Breast epithelium (tissue), 4 donors: ENCODE measurements at regions of chr17 and their contacts with region 1.

Region 1: GRCh38 chr17:28951991-28952975 is 965 bp upstream of the PHF12 start:
- DNase-seq: peak; percentile 95 to 99
- H3K4me3 ChIP-seq: peak overlapping the region; percentile 56 to 97 (median 96)
- H3K27ac ChIP-seq: peak overlapping the region; percentile 98
- H3K4me1 ChIP-seq: no peaks in the 10 kb centered on the region
- H3K27me3 ChIP-seq: no peaks in the 10 kb centered on the region
- CTCF ChIP-seq: no peak
- POLR2A ChIP-seq: peak; percentile 4

Region 2: DNA sequence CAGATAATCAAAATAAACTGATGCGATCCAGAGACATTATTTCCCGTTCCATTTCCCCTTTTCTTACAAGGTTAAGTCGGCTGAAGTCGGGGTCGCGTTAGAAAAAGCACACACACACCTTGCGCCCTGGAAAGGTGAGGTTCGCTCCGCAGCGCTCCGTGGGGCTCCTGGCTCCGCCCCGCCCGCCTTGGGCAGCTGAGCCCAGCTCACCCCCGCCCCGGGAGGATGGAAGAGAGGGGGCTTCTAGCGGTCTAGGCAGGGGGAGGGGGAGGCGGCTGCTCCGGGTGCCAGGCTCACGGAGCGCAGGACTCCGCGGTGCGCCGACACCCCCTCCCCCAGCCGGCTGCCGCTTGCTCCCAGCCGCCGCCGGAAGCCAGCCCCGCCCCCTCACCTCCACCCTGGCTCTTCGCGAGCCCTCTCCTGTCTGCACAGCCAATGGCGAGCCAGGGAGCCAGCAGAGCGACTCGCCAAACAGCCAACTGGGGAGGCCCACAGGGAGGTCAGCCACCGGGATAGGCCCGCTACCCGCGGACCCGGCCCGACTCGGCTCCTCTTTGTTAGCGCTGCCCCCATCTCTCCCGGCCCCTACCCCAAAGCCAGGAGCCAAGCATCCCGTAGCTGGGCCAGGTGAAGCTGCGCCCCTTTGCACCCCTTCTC is 140.1 kb before region 1 on chr17:
- intact Hi-C with region 1: loop called (anchors 10 kb)
- DNase-seq: peak; percentile 96 to 97
- H3K4me3 ChIP-seq: peak overlapping the region; percentile 86 to 90 (median 89)
- H3K27ac ChIP-seq: peak overlapping the region; percentile 88 to 92
- H3K4me1 ChIP-seq: peaks cover 7 to 19% of the 10 kb centered on the region in 2 donors
- H3K27me3 ChIP-seq: no peaks in the 10 kb centered on the region
- CTCF ChIP-seq: no peak
- POLR2A ChIP-seq: no peak

Region 3: GRCh38 chr17:28940675-28941074 is 11.6 kb before region 1 on chr17:
- intact Hi-C with region 1: loop called (anchors 1 kb)
- DNase-seq: no peak
- H3K4me3 ChIP-seq: no peak overlapping the region
- H3K27ac ChIP-seq: no peak overlapping the region
- H3K4me1 ChIP-seq: peaks cover 0 to 37% of the 10 kb centered on the region in 2 donors
- H3K27me3 ChIP-seq: no peaks in the 10 kb centered on the region
- CTCF ChIP-seq: no peak
- POLR2A ChIP-seq: no peak

Region 4: GRCh38 chr17:28982131-28982951 is 30.1 kb after region 1 on chr17:
- intact Hi-C with region 1: no loop called
- DNase-seq: peak in 1 of 2 donors; percentile 28
- H3K4me3 ChIP-seq: no peak overlapping the region
- H3K27ac ChIP-seq: peak overlapping the region in 1 of 2 donors; percentile 61
- H3K4me1 ChIP-seq: no peaks in the 10 kb centered on the region
- H3K27me3 ChIP-seq: peaks cover 0 to 13% of the 10 kb centered on the region in 2 donors
- CTCF ChIP-seq: no peak
- POLR2A ChIP-seq: no peak

Region 5: DNA sequence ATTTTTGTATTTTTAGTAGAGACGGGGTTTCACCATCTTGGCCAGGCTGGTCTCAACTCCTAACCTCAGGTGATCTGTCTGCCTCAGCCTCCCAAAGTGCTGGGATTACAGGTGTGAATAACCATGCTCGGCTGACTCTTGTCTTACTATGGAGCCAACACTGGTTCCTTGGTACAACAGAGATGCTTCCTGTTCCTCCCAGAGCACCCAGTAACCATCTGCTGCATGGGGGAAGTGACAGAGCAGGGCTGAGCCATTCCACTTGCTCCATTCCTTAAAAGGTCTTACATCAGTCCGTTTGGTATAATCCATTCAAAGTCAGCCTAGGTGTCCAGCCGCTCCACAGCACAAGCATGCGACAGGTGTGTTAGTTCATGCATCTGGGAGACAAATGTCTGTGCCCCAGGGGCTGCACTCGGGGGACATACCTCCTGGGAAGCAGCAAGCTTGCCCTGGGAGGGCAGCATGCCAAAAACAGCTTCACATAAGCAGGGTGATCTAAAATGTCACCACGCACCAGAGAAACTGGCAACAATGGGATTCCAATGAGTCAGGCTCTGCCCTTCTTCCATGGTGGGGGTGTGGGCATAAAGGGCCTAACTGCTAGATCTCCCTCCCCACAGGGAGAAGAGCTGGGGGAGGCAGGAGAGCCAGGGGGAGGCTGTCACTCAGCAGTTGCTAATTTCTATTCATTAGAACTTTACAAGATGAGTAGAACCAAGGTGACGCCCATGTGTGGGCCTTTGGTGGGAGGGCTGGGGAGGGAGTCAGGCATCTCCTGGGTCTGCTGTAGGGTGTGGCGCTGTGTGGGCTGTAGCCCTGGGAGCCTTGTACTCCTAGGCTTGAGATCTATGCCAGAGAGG is 126.1 kb after region 1 on chr17:
- intact Hi-C with region 1: no loop called
- DNase-seq: no peak
- H3K4me3 ChIP-seq: no peak overlapping the region
- H3K27ac ChIP-seq: no peak overlapping the region
- H3K4me1 ChIP-seq: no peaks in the 10 kb centered on the region
- H3K27me3 ChIP-seq: no peaks in the 10 kb centered on the region
- CTCF ChIP-seq: no peak
- POLR2A ChIP-seq: no peak